B cell (primary cell): ENCODE measurements at regions of chr15 and their contacts with region 1.

Region 1: DNA sequence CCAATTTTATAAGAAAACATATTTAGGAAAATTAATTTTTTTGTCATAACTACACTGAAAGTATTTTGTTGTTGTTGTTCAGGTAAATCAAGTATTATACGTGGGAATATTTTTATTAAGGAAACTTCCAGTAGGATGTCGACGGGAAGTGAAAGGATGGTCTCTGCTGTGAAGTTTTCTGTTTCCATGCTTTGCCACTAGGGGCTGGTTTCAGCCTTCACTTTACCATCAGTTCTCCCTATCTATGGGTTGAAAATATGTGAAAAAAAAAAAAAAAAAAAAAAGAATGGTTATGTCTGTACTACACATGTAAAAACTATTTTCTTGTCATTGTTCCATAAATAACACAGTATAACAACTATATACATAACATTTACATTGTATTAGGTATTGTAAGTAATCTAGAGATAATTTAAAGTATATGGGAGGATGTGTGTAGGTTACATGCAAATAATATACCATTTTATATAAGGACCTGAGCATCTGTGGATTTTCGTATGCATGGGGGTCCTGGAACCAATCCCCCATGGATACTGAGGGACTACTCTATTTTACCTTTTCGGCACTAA is 136.7 kb downstream of the SMAD6 start:
- DNase-seq: peak; percentile 36
- ATAC-seq: no peak
- H3K4me3 ChIP-seq: no peak overlapping the region
- H3K4me3 Mint-ChIP-seq: no peak overlapping the region
- H3K27ac ChIP-seq: no peak overlapping the region
- H3K27ac Mint-ChIP-seq: no peak overlapping the region
- H3K4me1 ChIP-seq: peaks cover 29 to 35% of the 10 kb centered on the region in 2 donors
- H3K4me1 Mint-ChIP-seq: peaks cover 40% of the 10 kb centered on the region
- H3K27me3 ChIP-seq: peaks cover 0 to 26% (median 14%) of the 10 kb centered on the region in 4 experiments
- H3K27me3 Mint-ChIP-seq: peaks cover 22% of the 10 kb centered on the region
- CTCF ChIP-seq: peak; percentile 69

Region 2: DNA sequence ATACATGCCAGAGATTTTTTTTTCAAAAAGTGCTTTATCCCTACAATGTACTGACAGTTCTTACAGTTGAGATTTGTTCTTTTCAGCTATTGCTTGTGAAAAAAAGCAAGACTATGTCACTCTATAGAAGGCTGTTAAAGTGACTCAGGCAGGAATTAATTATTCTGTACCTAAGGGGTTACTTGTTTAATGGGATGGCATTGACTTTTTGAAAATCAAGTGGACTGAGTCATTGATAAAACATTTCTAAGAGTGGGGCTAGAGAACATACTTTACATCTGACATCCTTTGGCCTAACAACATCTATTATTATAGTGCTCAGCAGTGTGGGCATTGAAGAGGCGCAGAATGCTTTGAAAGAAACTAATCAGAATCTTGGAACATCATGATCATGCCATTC is 1262.1 kb before region 1 on chr15:
- CTCF ChIA-PET with region 1: no interaction called
- POLR2A ChIA-PET with region 1: no interaction called
- intact Hi-C with region 1: no loop called
- DNase-seq: no peak
- ATAC-seq: no peak
- H3K4me3 ChIP-seq: no peak overlapping the region
- H3K4me3 Mint-ChIP-seq: no peak overlapping the region
- H3K27ac ChIP-seq: no peak overlapping the region
- H3K27ac Mint-ChIP-seq: peak overlapping the region; percentile 10
- H3K4me1 ChIP-seq: peaks cover 7% of the 10 kb centered on the region in 2 donors
- H3K4me1 Mint-ChIP-seq: peaks cover 10% of the 10 kb centered on the region
- H3K27me3 ChIP-seq: no peaks in the 10 kb centered on the region
- H3K27me3 Mint-ChIP-seq: no peaks in the 10 kb centered on the region
- CTCF ChIP-seq: no peak

Region 3: DNA sequence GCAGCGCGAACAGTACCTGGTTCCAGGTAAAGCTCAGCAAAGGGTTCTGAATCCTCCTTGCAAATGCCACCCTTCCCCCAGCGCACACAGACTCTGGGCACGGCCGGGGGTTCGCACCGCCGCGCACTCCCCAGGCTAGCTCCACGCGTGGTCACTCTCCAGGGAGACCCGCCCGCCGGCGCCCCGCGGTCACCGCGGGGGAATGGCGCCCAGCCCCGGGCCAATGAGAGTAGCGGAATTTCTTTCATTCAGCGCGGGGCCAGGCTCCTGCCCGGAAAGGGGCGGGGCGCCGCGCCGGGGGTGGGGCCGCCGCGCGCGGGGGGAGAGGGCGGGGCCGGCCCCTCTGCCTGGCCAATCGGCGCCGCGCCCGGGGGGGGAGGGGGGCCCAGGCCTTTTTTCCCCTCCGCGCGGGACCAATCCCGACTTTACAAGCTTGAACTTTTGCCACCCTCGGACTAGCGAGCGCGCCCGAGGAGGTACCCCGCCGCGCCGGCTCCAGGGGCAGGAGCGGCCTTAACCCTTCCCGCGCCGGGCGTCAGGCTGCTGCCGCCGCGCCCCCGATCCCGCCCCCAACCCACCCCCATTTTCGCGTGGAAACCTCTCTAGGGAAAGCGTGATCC is 137.8 kb before region 1 on chr15:
- CTCF ChIA-PET with region 1: no interaction called
- POLR2A ChIA-PET with region 1: no interaction called
- intact Hi-C with region 1: loop called (anchors 10 kb)
- DNase-seq: peak; percentile 88
- ATAC-seq: peak; percentile 84
- H3K4me3 ChIP-seq: peak overlapping the region; percentile 63 to 80 (median 77)
- H3K4me3 Mint-ChIP-seq: peak overlapping the region; percentile 94
- H3K27ac ChIP-seq: peak overlapping the region in 1 of 2 donors; percentile 47
- H3K27ac Mint-ChIP-seq: peak overlapping the region; percentile 85
- H3K4me1 ChIP-seq: peaks cover 17 to 27% of the 10 kb centered on the region in 2 donors
- H3K4me1 Mint-ChIP-seq: peaks cover 19% of the 10 kb centered on the region
- H3K27me3 ChIP-seq: peaks cover 0 to 34% (median 7%) of the 10 kb centered on the region in 4 experiments
- H3K27me3 Mint-ChIP-seq: peaks cover 17% of the 10 kb centered on the region
- CTCF ChIP-seq: no peak